Ovary (tissue), 10 donors: ENCODE measurements at regions of chr1 and their contacts with region 1.

Region 1: DNA sequence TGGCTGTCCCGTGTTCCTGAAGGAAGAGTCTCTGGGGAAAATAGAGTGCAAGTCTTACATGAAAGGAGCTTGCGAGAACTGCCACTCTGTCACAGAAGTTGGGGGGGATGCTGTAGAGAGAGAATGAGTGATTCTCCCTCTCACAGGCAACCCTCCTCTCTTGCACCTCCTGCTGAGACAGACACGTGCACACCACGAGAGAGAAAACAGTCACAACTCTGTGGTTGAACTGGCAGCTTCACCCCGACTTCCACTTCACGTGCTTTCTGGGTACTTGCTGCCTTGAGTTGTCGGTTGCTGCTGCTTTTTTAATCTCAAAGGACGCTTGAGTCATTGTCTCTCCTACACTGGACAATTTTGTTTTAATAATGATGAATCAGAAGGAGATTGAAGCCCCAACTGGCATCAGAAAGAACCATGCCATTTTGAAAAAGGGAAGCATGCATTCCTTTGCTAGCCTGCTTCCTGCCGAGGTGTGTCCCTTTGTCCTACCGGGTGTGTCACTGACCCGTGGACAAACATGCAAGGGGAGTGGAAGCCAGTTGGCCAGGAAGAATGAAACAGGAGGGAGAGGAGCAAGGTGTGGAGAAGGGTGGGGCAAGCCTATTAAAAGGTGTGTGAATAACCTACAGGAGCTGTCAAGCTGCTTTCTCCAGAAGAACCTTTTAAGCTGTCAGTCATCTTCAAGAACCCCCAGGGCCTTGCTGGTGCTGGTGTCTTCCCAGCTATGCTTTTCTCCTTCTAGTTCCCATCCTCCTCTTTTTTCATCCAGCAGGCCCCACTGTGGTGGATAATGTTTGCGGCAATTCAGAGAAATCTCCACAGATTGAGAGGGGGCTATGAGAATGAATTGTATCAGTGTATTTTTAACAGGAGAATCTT is 164.2 kb downstream of the CACNA1E start:
- DNase-seq: no peak
- H3K4me3 ChIP-seq: no peak overlapping the region
- H3K27ac ChIP-seq: no peak overlapping the region
- H3K4me1 ChIP-seq: no peaks in the 10 kb centered on the region
- H3K27me3 ChIP-seq: no peaks in the 10 kb centered on the region
- CTCF ChIP-seq: no peak
- EP300 ChIP-seq: no peak
- POLR2A ChIP-seq: no peak

Region 2: DNA sequence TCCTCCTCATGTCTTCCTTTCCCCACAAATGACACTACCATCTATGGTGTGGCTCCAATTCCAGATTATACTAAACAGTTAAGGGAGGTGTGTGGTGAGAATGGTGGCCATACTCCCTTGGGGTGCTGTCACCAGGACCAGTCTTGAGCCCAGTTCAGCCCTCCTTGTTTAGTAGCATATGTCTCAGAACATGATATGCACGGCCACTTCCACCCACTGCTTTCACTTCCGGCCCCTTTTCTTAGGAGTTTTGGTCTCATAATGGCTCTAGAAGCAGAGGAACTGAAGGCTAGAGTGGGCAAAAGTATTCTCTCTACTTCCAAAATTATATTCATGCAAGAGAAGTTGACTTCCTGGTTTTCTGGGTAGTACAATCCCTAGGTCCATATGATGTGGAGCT is 209.5 kb before region 1 on chr1:
- intact Hi-C with region 1: no loop called
- DNase-seq: no peak
- H3K4me3 ChIP-seq: no peak overlapping the region
- H3K27ac ChIP-seq: no peak overlapping the region
- H3K4me1 ChIP-seq: no peaks in the 10 kb centered on the region
- H3K27me3 ChIP-seq: no peaks in the 10 kb centered on the region
- CTCF ChIP-seq: no peak
- EP300 ChIP-seq: no peak
- POLR2A ChIP-seq: no peak

Region 3: DNA sequence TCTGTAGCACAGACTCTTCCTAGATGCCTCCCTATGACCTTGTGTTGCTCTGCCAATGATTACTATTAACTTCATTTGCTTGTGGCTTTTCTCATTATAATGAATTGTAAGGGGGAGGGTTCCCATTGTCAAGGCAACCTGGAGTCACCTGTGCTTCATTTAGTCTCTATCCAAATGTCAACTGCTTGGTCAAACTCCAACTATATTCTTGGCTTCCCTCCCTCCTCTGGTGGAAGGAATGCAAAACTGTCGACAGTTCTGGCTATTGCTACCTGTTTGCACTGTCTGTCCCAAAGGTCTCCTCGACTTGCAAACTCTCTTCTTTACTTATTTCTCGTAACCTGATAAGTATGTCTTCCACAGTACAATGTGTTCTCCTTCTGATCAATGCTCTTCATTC is 64.0 kb before region 1 on chr1:
- intact Hi-C with region 1: loop called in 1 of 4 experiments (anchors 1 kb)
- DNase-seq: no peak
- H3K4me3 ChIP-seq: no peak overlapping the region
- H3K27ac ChIP-seq: no peak overlapping the region
- H3K4me1 ChIP-seq: no peaks in the 10 kb centered on the region
- H3K27me3 ChIP-seq: no peaks in the 10 kb centered on the region
- CTCF ChIP-seq: no peak
- EP300 ChIP-seq: no peak
- POLR2A ChIP-seq: no peak